ENCODE measurements at regions of chr19 and their contacts with region 1.

Region 1: GRCh38 chr19:680287-681028 is 4.3 kb downstream of the FSTL3 start:
- DNase-seq: peak; percentile 94 to 100 (median 97)
- ATAC-seq: peak; percentile 91
- H3K4me3 ChIP-seq: peak overlapping the region; percentile 78
- H3K4me3 Mint-ChIP-seq: peak overlapping the region; percentile 77 to 95 (median 92)
- H3K27ac ChIP-seq: peak overlapping the region; percentile 82
- H3K27ac Mint-ChIP-seq: peak overlapping the region; percentile 89 to 100 (median 98)
- H3K4me1 ChIP-seq: peaks cover 5 to 12% of the 10 kb centered on the region in 2 donors
- H3K4me1 Mint-ChIP-seq: peaks cover 0 to 8% (median 2%) of the 10 kb centered on the region in 7 donors
- H3K27me3 ChIP-seq: peaks cover 0 to 2% of the 10 kb centered on the region in 2 donors
- H3K27me3 Mint-ChIP-seq: peaks cover under 1 to 10% (median under 1%) of the 10 kb centered on the region in 5 donors

Region 2: GRCh38 chr19:572140-572742 is 108.2 kb before region 1 on chr19 and contains the start of gene BSG:
- CTCF ChIA-PET with region 1: no interaction called
- POLR2A ChIA-PET with region 1: interaction called, 3 read pairs
- intact Hi-C with region 1: loop called in 1 of 2 experiments (anchors 1 kb)
- DNase-seq: peak; percentile 96 to 99 (median 99)
- ATAC-seq: peak; percentile 89
- H3K4me3 ChIP-seq: peak within 1 kb of the TSS; percentile 75
- H3K4me3 Mint-ChIP-seq: peak within 1 kb of the TSS; percentile 87 to 99 (median 96)
- H3K27ac ChIP-seq: peak within 1 kb of the TSS; percentile 93
- H3K27ac Mint-ChIP-seq: peak within 1 kb of the TSS; percentile 92 to 99 (median 96)
- H3K4me1 ChIP-seq: peaks cover 16 to 19% of the 10 kb centered on the region in 2 donors
- H3K4me1 Mint-ChIP-seq: peaks cover 12 to 49% (median 36%) of the 10 kb centered on the region in 7 donors
- H3K27me3 ChIP-seq: no peaks in the 10 kb centered on the region
- H3K27me3 Mint-ChIP-seq: peaks cover 0 to 4% (median 0%) of the 10 kb centered on the region in 5 donors
- total RNA-seq, gene BSG: 109 to 247 (median 120) TPM

Region 3: DNA sequence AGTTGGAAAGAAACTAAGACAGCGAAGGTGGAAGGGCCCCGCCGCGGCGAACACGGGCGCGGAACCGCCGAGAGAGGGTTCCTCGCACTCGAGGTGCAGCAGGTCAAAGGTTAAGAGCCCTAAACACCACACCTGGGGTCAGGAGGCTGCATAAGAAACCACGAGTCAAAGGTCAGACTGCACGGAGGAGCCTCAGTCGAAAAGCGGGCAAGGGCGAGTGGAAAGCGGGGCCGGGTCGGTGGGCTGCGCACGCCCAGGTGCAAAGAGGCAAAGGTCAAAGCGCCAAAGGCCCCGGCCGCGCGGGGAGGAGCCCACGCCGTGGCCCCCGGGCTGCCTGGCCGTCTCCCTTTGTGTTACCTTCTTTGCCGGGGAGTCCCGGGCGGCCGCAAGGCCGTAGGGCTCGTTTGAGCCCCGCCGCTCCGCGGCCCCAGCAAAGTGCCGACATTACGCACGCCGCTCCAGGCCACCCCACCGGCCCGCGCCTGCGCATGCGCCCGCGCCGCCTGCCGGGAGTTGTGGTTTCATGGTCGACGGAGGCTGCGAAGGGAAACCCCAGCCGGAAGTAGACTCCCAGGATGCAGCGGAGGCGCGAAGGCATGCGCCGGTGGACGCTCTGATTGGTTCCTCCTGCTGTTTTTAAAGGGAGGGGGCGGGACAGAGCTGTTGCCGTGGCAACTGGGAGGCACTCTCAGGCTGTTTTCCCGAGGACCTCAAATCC is 47.2 kb before region 1 on chr19 and contains the start of gene POLRMT:
- CTCF ChIA-PET with region 1: no interaction called
- POLR2A ChIA-PET with region 1: no interaction called
- intact Hi-C with region 1: loop called in 1 of 2 experiments (anchors 1 kb)
- DNase-seq: peak; percentile 87 to 99 (median 96)
- ATAC-seq: peak; percentile 99
- H3K4me3 ChIP-seq: peak within 1 kb of the TSS; percentile 91
- H3K4me3 Mint-ChIP-seq: peak within 1 kb of the TSS; percentile 92 to 99 (median 97)
- H3K27ac ChIP-seq: peak within 1 kb of the TSS; percentile 78
- H3K27ac Mint-ChIP-seq: peak within 1 kb of the TSS; percentile 89 to 97 (median 93)
- H3K4me1 ChIP-seq: peaks cover 6 to 13% of the 10 kb centered on the region in 2 donors
- H3K4me1 Mint-ChIP-seq: peaks cover 13 to 41% (median 24%) of the 10 kb centered on the region in 7 donors
- H3K27me3 ChIP-seq: no peaks in the 10 kb centered on the region
- H3K27me3 Mint-ChIP-seq: no peaks in the 10 kb centered on the region
- total RNA-seq, gene POLRMT: 61.2 to 105 (median 71.3) TPM

Region 4: GRCh38 chr19:703651-704446 is 23.4 kb after region 1 on chr19:
- CTCF ChIA-PET with region 1: no interaction called
- POLR2A ChIA-PET with region 1: no interaction called
- intact Hi-C with region 1: loop called (anchors 1 kb)
- DNase-seq: peak; percentile 42 to 73 (median 50)
- ATAC-seq: peak; percentile 93
- H3K4me3 ChIP-seq: peak overlapping the region; percentile 13
- H3K4me3 Mint-ChIP-seq: peak overlapping the region in 7 of 10 donors; percentile 17 to 79 (median 42)
- H3K27ac ChIP-seq: no peak overlapping the region
- H3K27ac Mint-ChIP-seq: peak overlapping the region in 1 of 9 donors; percentile 3
- H3K4me1 ChIP-seq: peaks cover 0 to 6% of the 10 kb centered on the region in 2 donors
- H3K4me1 Mint-ChIP-seq: peaks cover 0 to 20% (median 12%) of the 10 kb centered on the region in 7 donors
- H3K27me3 ChIP-seq: peaks cover 0 to 5% of the 10 kb centered on the region in 2 donors
- H3K27me3 Mint-ChIP-seq: peaks cover 5 to 27% (median 9%) of the 10 kb centered on the region in 5 donors

Region 5: GRCh38 chr19:860481-861101 is 180.1 kb after region 1 on chr19:
- CTCF ChIA-PET with region 1: no interaction called
- POLR2A ChIA-PET with region 1: no interaction called
- intact Hi-C with region 1: loop called (anchors 1 to 5 kb)
- DNase-seq: peak in 8 of 9 donors; percentile 46 to 69 (median 58)
- ATAC-seq: peak; percentile 55
- H3K4me3 ChIP-seq: no peak overlapping the region
- H3K4me3 Mint-ChIP-seq: peak overlapping the region in 6 of 10 donors; percentile 17 to 64 (median 46)
- H3K27ac ChIP-seq: no peak overlapping the region
- H3K27ac Mint-ChIP-seq: no peak overlapping the region
- H3K4me1 ChIP-seq: peaks cover 14 to 23% of the 10 kb centered on the region in 2 donors
- H3K4me1 Mint-ChIP-seq: peaks cover 0 to 21% (median 16%) of the 10 kb centered on the region in 7 donors
- H3K27me3 ChIP-seq: no peaks in the 10 kb centered on the region
- H3K27me3 Mint-ChIP-seq: peaks cover 0 to 18% (median 0%) of the 10 kb centered on the region in 5 donors

Region 6: DNA sequence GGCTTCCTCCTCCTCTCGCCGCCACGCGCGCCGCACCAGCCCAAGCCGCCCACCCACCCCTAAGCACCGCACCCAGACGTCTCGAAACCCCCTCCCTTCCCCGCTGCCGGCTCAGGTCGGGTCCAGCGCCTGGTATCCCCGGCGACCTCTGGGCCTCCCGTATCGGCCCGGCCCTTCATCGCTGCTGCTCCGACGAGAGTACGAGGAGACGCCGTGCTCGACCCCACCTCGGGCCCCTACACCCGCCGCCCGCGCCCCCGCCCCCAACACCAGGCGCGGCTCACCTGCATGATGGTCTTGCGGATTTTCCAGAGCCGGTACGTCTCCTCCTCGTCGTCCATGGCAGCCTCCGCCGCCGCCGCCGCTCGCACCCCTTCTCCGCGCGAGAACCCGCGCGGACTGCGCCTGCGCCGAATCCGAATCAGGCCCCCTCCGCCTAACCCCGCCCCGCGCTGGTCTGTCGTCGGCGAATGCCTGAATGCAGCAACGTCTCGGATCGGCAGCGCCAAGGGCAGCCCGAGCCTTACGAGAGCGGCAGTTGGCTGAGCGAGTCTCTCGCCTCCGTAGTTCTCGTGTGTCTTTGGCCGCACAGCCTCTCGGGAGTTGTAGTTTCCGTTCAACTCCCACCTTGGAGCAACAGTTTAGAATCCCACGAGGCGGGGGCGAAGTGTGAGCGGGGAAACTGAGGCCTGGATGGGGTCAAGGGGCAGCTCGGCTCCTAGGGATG is 414.7 kb after region 1 on chr19 and contains the start of gene POLR2E:
- CTCF ChIA-PET with region 1: no interaction called
- POLR2A ChIA-PET with region 1: no interaction called
- intact Hi-C with region 1: loop called in 1 of 2 experiments (anchors 2 kb)
- DNase-seq: peak; percentile 97 to 99 (median 99)
- ATAC-seq: peak; percentile 98
- H3K4me3 ChIP-seq: peak within 1 kb of the TSS; percentile 68
- H3K4me3 Mint-ChIP-seq: peak within 1 kb of the TSS; percentile 80 to 97 (median 92)
- H3K27ac ChIP-seq: peak within 1 kb of the TSS; percentile 71
- H3K27ac Mint-ChIP-seq: peak within 1 kb of the TSS; percentile 87 to 97 (median 93)
- H3K4me1 ChIP-seq: peaks cover 18 to 23% of the 10 kb centered on the region in 2 donors
- H3K4me1 Mint-ChIP-seq: peaks cover 10 to 59% (median 44%) of the 10 kb centered on the region in 7 donors
- H3K27me3 ChIP-seq: no peaks in the 10 kb centered on the region
- H3K27me3 Mint-ChIP-seq: no peaks in the 10 kb centered on the region
- total RNA-seq, gene POLR2E: 75.3 to 157 (median 82.1) TPM

Measured in naive thymus-derived CD4-positive, alpha-beta T cell (primary cell).